Calu3 (cell line): ENCODE measurements at regions of chr3 and their contacts with region 1.

Region 1: GRCh38 chr3:58116161-58116955 is 94.4 kb downstream of the DNASE1L3 start:
- DNase-seq: peak; percentile 2
- H3K4me3 Mint-ChIP-seq: no peak overlapping the region
- H3K27ac Mint-ChIP-seq: no peak overlapping the region
- H3K4me1 Mint-ChIP-seq: peaks cover 54% of the 10 kb centered on the region
- H3K27me3 Mint-ChIP-seq: no peaks in the 10 kb centered on the region
- CTCF ChIP-seq: no peak

Region 2: GRCh38 chr3:58013973-58014649 is 102.2 kb before region 1 on chr3:
- CTCF ChIA-PET with region 1: interaction called, 7 read pairs
- intact Hi-C with region 1: loop called (anchors 5 kb)
- DNase-seq: no peak
- H3K4me3 Mint-ChIP-seq: no peak overlapping the region
- H3K27ac Mint-ChIP-seq: no peak overlapping the region
- H3K4me1 Mint-ChIP-seq: peaks cover 66% of the 10 kb centered on the region
- H3K27me3 Mint-ChIP-seq: no peaks in the 10 kb centered on the region
- CTCF ChIP-seq: no peak

Region 3: GRCh38 chr3:58154626-58155449 is 38.5 kb after region 1 on chr3:
- CTCF ChIA-PET with region 1: no interaction called
- intact Hi-C with region 1: loop called (anchors 5 kb)
- DNase-seq: no peak
- H3K4me3 Mint-ChIP-seq: no peak overlapping the region
- H3K27ac Mint-ChIP-seq: no peak overlapping the region
- H3K4me1 Mint-ChIP-seq: no peaks in the 10 kb centered on the region
- H3K27me3 Mint-ChIP-seq: no peaks in the 10 kb centered on the region
- CTCF ChIP-seq: no peak

Region 4: GRCh38 chr3:58433400-58434169 is 317.2 kb after region 1 on chr3 and contains the start of gene PDHB:
- CTCF ChIA-PET with region 1: no interaction called
- intact Hi-C with region 1: no loop called
- DNase-seq: peak; percentile 87
- H3K4me3 Mint-ChIP-seq: peak within 1 kb of the TSS; percentile 93
- H3K27ac Mint-ChIP-seq: peak within 1 kb of the TSS; percentile 73
- H3K4me1 Mint-ChIP-seq: peaks cover 17% of the 10 kb centered on the region
- H3K27me3 Mint-ChIP-seq: no peaks in the 10 kb centered on the region
- CTCF ChIP-seq: no peak
- total RNA-seq, gene PDHB: 45.4 and 47.6 TPM in 2 replicates